ENCODE measurements at regions of chr10 and their contacts with region 1.

Region 1: GRCh38 chr10:110304780-110305421 is at the start of gene SMNDC1:
- DNase-seq: peak; percentile 98
- ATAC-seq: peak; percentile 93
- H3K4me3 Mint-ChIP-seq: peak within 1 kb of the TSS; percentile 95
- H3K27ac Mint-ChIP-seq: peak within 1 kb of the TSS; percentile 98
- H3K4me1 Mint-ChIP-seq: peaks cover 42% of the 10 kb centered on the region
- H3K27me3 Mint-ChIP-seq: no peaks in the 10 kb centered on the region
- total RNA-seq, gene SMNDC1: 44.2 to 56.7 TPM

Region 2: DNA sequence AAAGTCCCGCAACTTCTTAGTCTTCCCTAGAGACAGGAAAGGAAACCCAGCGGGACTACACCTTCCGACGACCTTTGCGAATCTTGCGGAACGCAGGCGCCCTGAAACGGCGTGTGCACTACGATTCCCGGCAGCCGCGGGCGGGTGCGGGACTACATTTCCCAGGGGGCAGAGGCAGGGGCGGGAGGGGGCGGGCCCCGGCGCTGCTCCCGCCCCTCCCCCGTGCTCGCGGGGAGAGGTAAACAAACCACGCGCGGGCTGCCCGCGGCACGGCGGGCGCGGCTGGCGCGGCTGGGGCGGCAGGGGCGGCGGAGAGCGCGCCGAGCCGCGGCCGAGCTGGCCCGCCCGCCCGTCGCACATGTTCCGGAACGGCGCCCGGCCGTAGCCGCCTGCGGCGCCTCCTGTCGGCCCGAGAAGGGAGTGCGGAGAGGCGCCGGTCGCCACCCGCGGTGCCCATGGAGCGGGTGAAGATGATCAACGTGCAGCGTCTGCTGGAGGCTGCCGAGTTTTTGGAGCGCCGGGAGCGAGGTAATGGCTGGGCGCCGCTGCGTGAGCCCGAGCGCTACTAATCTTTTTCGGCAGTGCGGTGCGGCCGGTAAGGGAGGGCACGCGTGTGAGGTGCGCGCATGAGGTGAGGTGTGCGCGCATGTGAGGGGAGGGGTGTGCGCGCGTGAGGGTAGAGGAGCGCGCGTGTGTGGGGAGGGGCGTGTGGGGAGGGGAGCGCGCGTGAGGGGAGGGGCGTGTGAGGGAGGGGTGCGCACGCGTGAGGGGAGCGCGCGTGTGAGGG is 79.0 kb before region 1 on chr10:
- CTCF ChIA-PET with region 1: interaction called, 3 read pairs
- POLR2A ChIA-PET with region 1: interaction called, 3 read pairs
- intact Hi-C with region 1: loop called (anchors 1 kb)
- DNase-seq: peak; percentile 94
- ATAC-seq: peak; percentile 48
- H3K4me3 Mint-ChIP-seq: peak overlapping the region; percentile 95
- H3K27ac Mint-ChIP-seq: peak overlapping the region; percentile 95
- H3K4me1 Mint-ChIP-seq: peaks cover 44% of the 10 kb centered on the region
- H3K27me3 Mint-ChIP-seq: no peaks in the 10 kb centered on the region

Region 3: GRCh38 chr10:110547139-110547761 is 242.3 kb after region 1 on chr10:
- CTCF ChIA-PET with region 1: interaction called, 79 read pairs
- POLR2A ChIA-PET with region 1: no interaction called
- intact Hi-C with region 1: loop called (anchors 1 kb)
- DNase-seq: no peak
- ATAC-seq: peak; percentile 84
- H3K4me3 Mint-ChIP-seq: no peak overlapping the region
- H3K27ac Mint-ChIP-seq: peak overlapping the region; percentile 56
- H3K4me1 Mint-ChIP-seq: peaks cover 8% of the 10 kb centered on the region
- H3K27me3 Mint-ChIP-seq: peaks cover 6% of the 10 kb centered on the region

Region 4: GRCh38 chr10:110600487-110601101 is 295.7 kb after region 1 on chr10:
- CTCF ChIA-PET with region 1: interaction called, 31 read pairs
- POLR2A ChIA-PET with region 1: interaction called, 3 read pairs
- intact Hi-C with region 1: loop called (anchors 1 kb)
- DNase-seq: peak; percentile 53
- ATAC-seq: peak; percentile 84
- H3K4me3 Mint-ChIP-seq: no peak overlapping the region
- H3K27ac Mint-ChIP-seq: no peak overlapping the region
- H3K4me1 Mint-ChIP-seq: no peaks in the 10 kb centered on the region
- H3K27me3 Mint-ChIP-seq: no peaks in the 10 kb centered on the region

Region 5: GRCh38 chr10:110871298-110872084 is 566.6 kb after region 1 on chr10 and contains the start of gene PDCD4:
- CTCF ChIA-PET with region 1: no interaction called
- POLR2A ChIA-PET with region 1: no interaction called
- intact Hi-C with region 1: loop called in 1 of 2 experiments (anchors 2 kb)
- DNase-seq: peak; percentile 97
- ATAC-seq: peak; percentile 85
- H3K4me3 Mint-ChIP-seq: peak within 1 kb of the TSS; percentile 87
- H3K27ac Mint-ChIP-seq: peak within 1 kb of the TSS; percentile 95
- H3K4me1 Mint-ChIP-seq: peaks cover 63% of the 10 kb centered on the region
- H3K27me3 Mint-ChIP-seq: no peaks in the 10 kb centered on the region
- total RNA-seq, gene PDCD4: 69.8 to 125 TPM

Measured in activated CD4-positive, alpha-beta T cell treated with anti-CD3 and anti-CD28 coated beads for 36 hours (primary cell).